Heart right ventricle (tissue), 16 donors: ENCODE measurements at regions of chr14 and their contacts with region 1.

Region 1: DNA sequence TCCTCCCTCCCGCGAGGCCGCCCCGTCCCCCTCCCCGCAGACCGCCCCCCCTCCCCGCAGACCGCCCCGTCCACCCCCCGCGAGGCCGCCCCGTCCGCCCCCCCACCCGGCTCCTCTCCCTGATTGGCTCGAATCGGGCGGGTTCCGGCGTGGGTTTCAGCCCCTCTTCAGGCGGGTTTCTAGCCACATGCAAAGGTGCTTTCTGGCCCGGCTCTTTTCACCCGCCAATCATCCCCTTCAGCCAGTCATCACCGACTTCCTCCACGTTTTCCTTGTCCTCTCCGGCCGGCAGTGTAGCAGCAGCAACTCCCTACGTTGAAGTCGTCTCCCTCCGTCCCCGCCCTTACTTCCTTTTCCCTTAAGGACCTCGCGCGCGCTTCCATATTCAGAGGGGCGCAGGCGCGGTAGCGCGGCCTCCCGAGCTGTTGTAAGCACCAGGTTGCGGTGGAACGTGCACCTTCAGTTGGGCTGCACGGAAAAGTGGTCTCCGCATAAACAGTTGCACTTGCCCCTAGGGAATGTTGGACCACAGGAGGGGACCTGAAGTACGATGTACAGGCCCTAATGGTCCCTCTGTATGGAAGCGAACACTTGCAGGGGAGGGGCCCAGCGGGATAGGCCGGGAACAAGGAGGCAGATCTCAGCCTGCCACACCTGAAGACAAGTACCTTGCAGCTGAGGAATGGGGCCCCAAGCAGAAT is 44.6 kb upstream of the ESR2 start:
- DNase-seq: peak; percentile 91 to 96
- ATAC-seq: peak; percentile 95 to 98 (median 95)
- H3K4me3 ChIP-seq: peak overlapping the region in 9 of 10 donors; percentile 77 to 99 (median 84)
- H3K27ac ChIP-seq: peak overlapping the region in 9 of 10 donors; percentile 74 to 89 (median 84)
- H3K4me1 ChIP-seq: peaks cover 5 to 16% (median 9%) of the 10 kb centered on the region in 9 donors
- H3K27me3 ChIP-seq: no peaks in the 10 kb centered on the region
- CTCF ChIP-seq: no peak

Region 2: GRCh38 chr14:64387694-64388532 is 49.1 kb after region 1 on chr14 and contains the start of gene MTHFD1:
- intact Hi-C with region 1: loop called in 3 of 10 experiments (anchors 5 kb)
- DNase-seq: peak; percentile 99
- ATAC-seq: peak; percentile 92 to 97 (median 94)
- H3K4me3 ChIP-seq: peak within 1 kb of the TSS; percentile 54 to 96 (median 68)
- H3K27ac ChIP-seq: peak within 1 kb of the TSS; percentile 43 to 88 (median 82)
- H3K4me1 ChIP-seq: peaks cover 3 to 33% (median 16%) of the 10 kb centered on the region in 9 donors
- H3K27me3 ChIP-seq: no peaks in the 10 kb centered on the region
- CTCF ChIP-seq: no peak
- total RNA-seq, gene MTHFD1: 49.8 to 85.2 (median 66.9) TPM

Region 3: DNA sequence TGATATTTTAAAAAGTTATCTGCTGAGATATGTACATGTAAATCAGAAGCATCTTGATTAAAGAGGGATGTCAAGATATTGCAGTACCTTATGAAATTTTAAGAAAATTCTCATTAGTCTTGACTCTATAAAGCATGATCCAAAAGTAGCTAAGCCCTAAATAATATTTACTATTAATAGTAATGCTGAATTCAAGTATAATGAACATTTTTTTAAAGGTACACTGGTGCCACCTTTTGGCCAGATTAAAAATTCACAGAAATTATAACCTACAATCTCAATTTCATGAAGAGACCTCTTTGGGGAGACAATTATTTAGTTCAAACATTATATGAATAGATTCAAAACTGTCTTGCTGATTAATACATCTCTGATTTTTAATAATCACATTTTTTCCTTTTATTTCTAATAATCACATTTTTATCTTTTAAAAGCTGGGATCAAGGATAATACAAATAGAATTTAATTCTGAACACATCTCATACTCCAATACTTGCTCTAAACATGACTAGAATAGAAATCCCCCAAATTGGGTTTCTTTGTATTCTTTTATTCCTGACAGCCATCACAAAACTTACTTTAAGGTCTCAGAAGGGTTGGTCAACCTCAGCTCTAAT is 140.0 kb after region 1 on chr14:
- intact Hi-C with region 1: loop called in 8 of 10 experiments (anchors 2 to 10 kb)
- DNase-seq: no peak
- ATAC-seq: no peak
- H3K4me3 ChIP-seq: no peak overlapping the region
- H3K27ac ChIP-seq: no peak overlapping the region
- H3K4me1 ChIP-seq: peaks cover 0 to 5% (median 0%) of the 10 kb centered on the region in 9 donors
- H3K27me3 ChIP-seq: no peaks in the 10 kb centered on the region
- CTCF ChIP-seq: peak; percentile 12 to 68 (median 55)

Region 4: DNA sequence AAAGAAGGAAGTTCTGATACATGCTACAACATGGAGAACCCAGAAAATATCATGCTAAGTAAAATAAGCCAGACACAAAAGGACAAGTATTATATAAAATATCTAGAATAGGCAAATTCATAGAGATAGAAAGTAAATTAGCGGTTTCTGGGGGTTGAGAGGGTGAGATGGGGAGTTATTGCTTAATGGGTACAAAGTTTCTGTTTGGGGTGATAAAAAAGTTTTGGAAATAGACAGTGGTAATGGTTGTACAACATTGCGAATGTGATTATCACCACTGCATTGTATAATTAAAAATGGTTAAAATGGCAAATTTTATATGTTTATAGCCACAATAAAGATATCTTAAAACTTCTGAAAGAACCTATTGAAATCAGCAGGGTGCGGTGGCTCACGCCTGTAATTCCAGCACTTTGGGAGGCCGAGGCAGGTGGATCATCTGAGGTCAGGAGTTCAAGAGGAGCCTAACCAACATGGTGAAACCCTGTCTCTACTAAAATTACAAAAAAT is 149.9 kb after region 1 on chr14:
- intact Hi-C with region 1: loop called in 1 of 10 experiments (anchors 10 kb)
- DNase-seq: no peak
- ATAC-seq: no peak
- H3K4me3 ChIP-seq: no peak overlapping the region
- H3K27ac ChIP-seq: no peak overlapping the region
- H3K4me1 ChIP-seq: peaks cover 0 to 28% (median 13%) of the 10 kb centered on the region in 9 donors
- H3K27me3 ChIP-seq: no peaks in the 10 kb centered on the region
- CTCF ChIP-seq: no peak

Region 5: DNA sequence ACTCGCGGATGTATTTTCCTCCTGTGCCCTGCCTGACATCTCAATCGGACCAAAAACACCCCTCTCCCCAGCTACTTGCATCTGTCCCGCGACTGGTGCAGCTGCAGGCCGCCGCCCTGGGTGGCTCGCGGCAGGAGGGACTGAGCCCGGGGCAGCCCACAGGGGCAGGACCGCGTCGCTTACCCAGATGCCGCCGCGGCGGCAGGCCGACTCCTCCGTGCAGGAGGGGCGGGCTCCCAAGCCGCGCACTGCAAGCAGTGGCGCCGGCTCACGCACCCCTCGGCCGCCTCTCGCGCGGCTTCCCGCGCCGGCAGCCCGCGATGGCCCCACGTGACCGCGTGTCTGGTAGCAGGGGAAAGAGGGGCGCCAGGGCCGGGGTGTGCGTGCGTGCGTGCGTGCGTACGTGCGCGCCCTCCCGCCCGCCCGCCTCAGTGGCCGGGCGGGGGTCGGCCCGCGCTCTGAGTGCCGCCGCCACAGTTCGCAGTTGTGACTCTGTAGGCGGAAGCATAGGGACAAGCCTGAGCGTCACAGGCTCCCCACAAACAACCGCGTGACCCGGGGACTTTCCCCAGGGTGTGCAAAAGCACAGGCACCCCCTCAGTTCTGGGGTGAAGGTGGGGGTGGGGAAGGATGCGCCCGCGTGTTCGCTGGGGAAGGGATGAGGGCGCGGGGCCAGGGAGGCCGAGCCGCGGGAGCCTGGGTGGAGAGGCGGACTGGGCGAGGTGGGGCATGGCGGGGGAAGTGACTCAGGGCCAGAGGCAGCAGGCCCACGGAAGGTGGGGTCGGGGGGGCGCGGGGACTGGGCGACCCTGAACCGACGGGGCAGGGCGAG is 164.9 kb after region 1 on chr14 and contains the start of gene ZBTB25:
- intact Hi-C with region 1: loop called in 1 of 10 experiments (anchors 10 kb)
- DNase-seq: peak; percentile 83 to 91
- ATAC-seq: peak; percentile 78 to 93 (median 84)
- H3K4me3 ChIP-seq: peak within 1 kb of the TSS; percentile 66 to 97 (median 79)
- H3K27ac ChIP-seq: peak within 1 kb of the TSS; percentile 97 to 100 (median 99)
- H3K4me1 ChIP-seq: peaks cover 10 to 74% (median 65%) of the 10 kb centered on the region in 9 donors
- H3K27me3 ChIP-seq: no peaks in the 10 kb centered on the region
- CTCF ChIP-seq: no peak
- total RNA-seq, gene ZBTB25: 17.4 to 24.7 (median 21.2) TPM

Region 6: DNA sequence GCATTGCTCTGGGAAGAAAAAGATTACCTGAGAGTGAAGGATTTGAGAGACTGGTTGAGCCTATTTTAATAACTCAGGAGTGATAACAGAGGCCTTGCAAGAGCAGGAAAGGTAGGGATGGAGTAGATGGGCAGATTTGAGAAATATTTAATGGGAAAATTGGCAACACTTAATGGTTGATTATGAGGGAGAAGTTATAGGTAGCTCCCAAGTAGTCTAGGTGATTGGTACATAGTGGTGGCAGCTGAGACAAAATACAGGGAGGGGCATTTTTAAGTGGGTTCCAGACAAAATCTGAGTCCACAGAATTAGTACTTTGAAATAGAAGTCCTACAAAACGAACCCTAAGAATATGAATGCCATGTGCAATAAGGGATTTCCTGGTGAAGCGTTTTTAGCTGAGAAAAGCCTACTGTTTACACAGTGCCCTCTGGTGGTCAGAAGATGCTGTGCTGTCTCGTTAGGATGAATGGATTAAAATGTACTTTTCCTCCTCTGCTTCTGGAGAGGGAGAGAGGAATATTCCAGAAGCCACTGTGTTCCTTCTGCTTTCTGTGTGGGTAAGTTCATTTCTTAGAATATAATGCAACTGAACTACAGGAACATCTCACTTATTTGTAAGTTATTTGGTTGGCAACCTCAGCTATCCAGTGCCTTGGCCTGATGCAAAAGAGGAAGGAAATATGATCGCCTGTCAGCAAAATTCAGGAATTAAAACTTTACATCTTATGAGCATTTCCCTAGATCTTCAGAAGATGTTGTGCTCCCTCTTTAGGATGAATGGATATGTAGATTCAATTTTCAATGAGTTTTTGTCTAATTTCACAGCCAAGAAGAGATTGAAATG is 172.3 kb after region 1 on chr14:
- intact Hi-C with region 1: loop called in 2 of 10 experiments (anchors 5 to 10 kb)
- DNase-seq: peak in 1 of 2 donors; percentile 69
- ATAC-seq: peak in 7 of 8 donors; percentile 36 to 80 (median 71)
- H3K4me3 ChIP-seq: no peak overlapping the region
- H3K27ac ChIP-seq: peak overlapping the region in 6 of 10 donors; percentile 1 to 57 (median 18)
- H3K4me1 ChIP-seq: peaks cover 9 to 93% (median 77%) of the 10 kb centered on the region in 9 donors
- H3K27me3 ChIP-seq: no peaks in the 10 kb centered on the region
- CTCF ChIP-seq: peak; percentile 73 to 92 (median 90)

Region 7: DNA sequence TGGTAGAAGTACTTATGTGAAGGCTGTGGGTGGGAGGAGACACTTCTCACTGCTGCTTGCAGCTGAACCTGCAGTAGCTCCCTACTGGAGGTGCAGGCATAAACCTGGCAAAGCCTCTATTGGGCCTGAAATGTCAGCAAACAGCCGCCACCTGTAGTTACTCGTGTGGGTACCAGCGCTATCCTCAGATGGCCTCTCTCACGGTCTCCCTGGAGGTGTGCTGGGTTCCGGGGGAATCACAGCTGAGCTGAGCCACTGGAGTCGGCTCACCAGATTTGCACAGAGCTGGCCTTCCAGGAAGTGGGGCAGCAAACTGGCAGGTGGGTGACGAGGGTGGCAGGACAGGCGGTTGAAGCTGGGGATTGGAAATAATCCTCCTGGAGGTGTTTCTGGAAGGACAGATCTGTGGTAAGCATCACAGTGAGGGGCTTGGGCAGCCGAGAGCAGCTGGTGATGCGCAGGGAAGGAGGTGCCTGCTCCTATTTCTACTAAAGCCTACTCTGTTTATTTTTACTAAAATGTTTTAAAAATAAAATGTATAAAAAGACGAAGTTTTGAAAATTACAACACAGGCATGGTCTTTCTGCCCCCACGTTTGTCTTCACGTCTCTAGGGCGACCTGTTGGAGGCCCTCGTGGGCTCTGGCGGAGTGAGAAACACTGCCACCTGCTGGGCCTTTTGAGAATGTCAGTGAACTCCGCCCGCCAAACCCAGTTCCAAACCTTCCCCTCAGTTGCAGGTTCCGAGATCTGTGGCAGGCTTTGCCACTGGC is 297.6 kb after region 1 on chr14:
- intact Hi-C with region 1: loop called in 5 of 10 experiments (anchors 5 to 10 kb)
- DNase-seq: peak; percentile 66 to 67
- ATAC-seq: peak; percentile 77 to 93 (median 92)
- H3K4me3 ChIP-seq: no peak overlapping the region
- H3K27ac ChIP-seq: no peak overlapping the region
- H3K4me1 ChIP-seq: peaks cover 0 to 11% (median 0%) of the 10 kb centered on the region in 9 donors
- H3K27me3 ChIP-seq: no peaks in the 10 kb centered on the region
- CTCF ChIP-seq: peak; percentile 79 to 95 (median 90)